ENCODE measurements at regions of chr2 and their contacts with region 1.

Region 1: DNA sequence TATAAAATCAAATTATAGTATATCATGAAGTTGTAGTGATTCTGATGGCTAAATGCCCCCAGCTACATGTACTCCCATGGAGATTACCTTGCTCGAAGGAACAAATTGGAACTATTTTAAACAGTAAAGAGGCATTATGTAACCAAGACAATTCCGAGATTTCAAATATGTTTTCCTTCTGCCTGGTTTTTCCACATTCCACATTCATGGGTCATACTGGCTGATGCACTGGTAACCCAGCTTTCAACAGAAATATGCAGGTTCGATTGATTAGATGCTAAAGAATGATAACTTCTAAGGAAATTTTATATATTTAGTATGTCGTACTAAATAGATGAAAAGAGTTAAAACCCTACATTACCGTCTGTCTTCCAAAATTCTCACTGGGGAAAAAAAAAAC is 62.4 kb upstream of the MGAT4A start:
- DNase-seq: peak; percentile 35 to 93
- H3K4me3 ChIP-seq: peak overlapping the region; percentile 22; the same call in 1 of the 2 replicates
- H3K27ac ChIP-seq: peak overlapping the region; percentile 75
- H3K4me1 ChIP-seq: peaks cover 28% of the 10 kb centered on the region
- H3K27me3 ChIP-seq: no peaks in the 10 kb centered on the region
- CTCF ChIP-seq: no peak

Region 2: DNA sequence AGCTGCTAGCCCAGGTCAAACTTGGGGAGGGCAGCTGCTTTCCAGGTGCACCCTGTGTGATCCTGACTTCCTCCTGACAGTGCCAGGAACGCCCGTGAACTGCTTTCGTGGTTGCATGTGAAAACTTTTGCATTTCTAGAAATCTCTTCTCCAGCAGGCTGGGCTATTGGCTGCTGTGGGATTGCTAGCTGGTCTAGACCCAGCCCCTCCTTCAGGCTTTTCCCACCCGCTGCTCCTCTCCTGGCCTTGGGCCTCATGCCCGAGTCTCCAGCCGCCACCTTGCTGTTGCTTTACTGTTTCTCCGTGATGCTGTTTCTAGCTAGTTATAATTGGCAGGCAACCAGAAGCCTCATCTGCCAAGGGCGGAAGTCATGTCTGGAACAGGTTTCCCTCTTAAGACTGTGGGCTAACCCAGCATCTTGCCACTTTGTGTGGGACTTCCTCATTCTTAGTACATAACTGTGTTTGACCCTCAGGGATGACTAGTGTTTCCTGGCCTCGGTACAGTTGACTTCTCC is 35.3 kb before region 1 on chr2:
- CTCF ChIA-PET with region 1: no interaction called
- POLR2A ChIA-PET with region 1: interaction called, 3 read pairs
- intact Hi-C with region 1: loop called (anchors 1 kb)
- DNase-seq: peak; percentile 86 to 100
- H3K4me3 ChIP-seq: no peak overlapping the region
- H3K27ac ChIP-seq: peak overlapping the region; percentile 73
- H3K4me1 ChIP-seq: peaks cover 38% of the 10 kb centered on the region
- H3K27me3 ChIP-seq: no peaks in the 10 kb centered on the region
- CTCF ChIP-seq: no peak

Region 3: DNA sequence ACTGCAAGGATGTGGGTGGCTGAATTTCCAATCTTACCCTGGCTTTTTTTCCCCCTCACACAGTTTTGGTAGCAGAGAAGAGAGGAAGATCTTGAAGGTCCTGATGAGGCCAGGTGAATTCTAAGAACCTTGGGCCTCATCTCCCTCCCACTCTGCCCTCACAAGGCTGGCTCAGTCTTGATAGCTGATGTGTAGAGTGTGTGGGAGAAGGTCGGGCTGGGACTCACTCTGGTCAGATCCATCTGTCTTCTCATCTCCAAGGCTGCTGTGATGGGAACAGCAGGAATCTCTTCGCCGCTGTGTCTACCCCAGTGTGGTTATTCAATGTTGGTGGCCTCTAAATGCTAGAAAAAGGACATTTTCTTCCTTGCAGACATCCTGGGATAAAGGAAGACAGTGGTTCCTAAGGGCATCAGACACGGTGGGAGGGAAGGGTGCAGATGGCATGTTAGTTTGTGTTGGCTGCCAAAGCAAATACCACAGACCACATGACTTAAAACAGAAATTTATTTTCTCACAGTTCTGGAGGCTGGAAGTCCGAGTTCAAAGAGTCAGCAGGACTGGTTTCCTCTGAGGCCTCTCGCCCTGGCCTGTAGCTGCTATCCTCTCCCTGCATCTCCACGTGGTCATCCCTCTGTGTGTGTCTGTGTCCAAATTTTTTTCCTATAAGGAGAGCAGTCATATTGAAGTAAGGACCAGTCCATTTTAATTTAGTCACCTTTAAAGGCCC is 24.8 kb before region 1 on chr2:
- CTCF ChIA-PET with region 1: no interaction called
- POLR2A ChIA-PET with region 1: interaction called, 3 read pairs
- intact Hi-C with region 1: loop called (anchors 1 kb)
- DNase-seq: peak; percentile 32 to 76
- H3K4me3 ChIP-seq: no peak overlapping the region
- H3K27ac ChIP-seq: no peak overlapping the region
- H3K4me1 ChIP-seq: peaks cover 34% of the 10 kb centered on the region
- H3K27me3 ChIP-seq: no peaks in the 10 kb centered on the region
- CTCF ChIP-seq: no peak

Measured in PC-9 (cell line).